ENCODE measurements at regions of chr10 and their contacts with region 1.

Region 1: GRCh38 chr10:103427866-103428265 is 24.3 kb downstream of the CALHM2 start:
- DNase-seq: no peak
- H3K4me3 ChIP-seq: no peak overlapping the region
- H3K27ac ChIP-seq: no peak overlapping the region
- H3K4me1 ChIP-seq: no peaks in the 10 kb centered on the region
- CTCF ChIP-seq: no peak

Region 2: GRCh38 chr10:103373544-103373943 is 54.3 kb before region 1 on chr10:
- CTCF ChIA-PET with region 1: no interaction called
- POLR2A ChIA-PET with region 1: no interaction called
- intact Hi-C with region 1: no loop called
- DNase-seq: no peak
- H3K4me3 ChIP-seq: no peak overlapping the region
- H3K27ac ChIP-seq: no peak overlapping the region
- H3K4me1 ChIP-seq: peaks cover 20% of the 10 kb centered on the region
- CTCF ChIP-seq: no peak

Region 3: GRCh38 chr10:103451831-103452505 is 24.1 kb after region 1 on chr10 and contains the start of gene CALHM2:
- CTCF ChIA-PET with region 1: no interaction called
- POLR2A ChIA-PET with region 1: no interaction called
- intact Hi-C with region 1: loop called (anchors 2 kb)
- DNase-seq: no peak
- H3K4me3 ChIP-seq: no peak within 1 kb of the TSS
- H3K27ac ChIP-seq: no peak within 1 kb of the TSS
- H3K4me1 ChIP-seq: no peaks in the 10 kb centered on the region
- CTCF ChIP-seq: no peak
- total RNA-seq, gene CALHM2: not detected in 2 replicates

Region 4: DNA sequence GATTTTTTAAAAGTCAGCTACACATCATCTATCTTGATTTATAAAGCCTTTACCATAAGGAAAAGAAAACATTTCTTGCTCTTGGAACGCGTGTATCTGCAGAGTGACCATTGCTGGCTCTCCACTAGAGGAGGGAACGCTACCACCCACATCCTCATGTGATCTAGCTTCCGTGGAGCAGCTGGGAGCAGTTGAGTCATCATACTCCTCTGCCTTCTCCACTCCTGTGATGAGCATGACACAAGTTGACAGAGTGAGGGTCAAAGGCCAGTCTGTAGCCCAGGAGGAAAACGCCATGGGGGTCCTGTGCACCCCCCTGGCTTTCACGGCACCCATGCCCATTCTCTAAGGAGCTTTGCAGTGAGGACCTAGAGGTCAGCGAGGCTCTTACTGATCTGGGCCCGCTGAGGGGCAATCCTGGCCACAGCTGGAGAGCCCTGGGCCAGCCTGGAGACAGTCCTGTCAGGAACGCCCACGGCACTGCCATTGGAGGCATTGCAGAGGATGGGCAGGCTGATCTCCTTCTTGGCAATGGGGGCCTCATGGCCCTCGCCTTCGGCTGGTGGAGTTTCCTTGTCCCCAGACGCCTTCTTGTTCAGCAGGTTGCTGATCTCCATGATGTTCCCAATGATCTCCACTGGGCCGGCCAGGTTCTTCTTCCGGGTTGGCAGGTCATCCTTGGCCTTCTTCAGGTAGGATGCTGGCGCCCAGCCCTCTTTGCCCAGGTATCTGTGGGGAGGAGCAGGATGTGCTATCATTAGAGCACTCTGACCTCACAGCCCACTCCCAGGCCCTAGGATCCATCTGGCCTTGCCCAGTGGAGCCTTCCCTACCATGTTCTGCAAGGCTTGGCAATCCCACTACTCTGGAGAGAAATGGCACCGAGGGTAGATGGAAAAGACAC is 184.8 kb after region 1 on chr10:
- CTCF ChIA-PET with region 1: no interaction called
- POLR2A ChIA-PET with region 1: no interaction called
- intact Hi-C with region 1: no loop called
- DNase-seq: no peak
- H3K4me3 ChIP-seq: no peak overlapping the region
- H3K27ac ChIP-seq: no peak overlapping the region
- H3K4me1 ChIP-seq: no peaks in the 10 kb centered on the region
- CTCF ChIP-seq: no peak

Measured in OCI-LY7 (cell line).